ENCODE measurements at regions of chr2 and their contacts with region 1.

Region 1: DNA sequence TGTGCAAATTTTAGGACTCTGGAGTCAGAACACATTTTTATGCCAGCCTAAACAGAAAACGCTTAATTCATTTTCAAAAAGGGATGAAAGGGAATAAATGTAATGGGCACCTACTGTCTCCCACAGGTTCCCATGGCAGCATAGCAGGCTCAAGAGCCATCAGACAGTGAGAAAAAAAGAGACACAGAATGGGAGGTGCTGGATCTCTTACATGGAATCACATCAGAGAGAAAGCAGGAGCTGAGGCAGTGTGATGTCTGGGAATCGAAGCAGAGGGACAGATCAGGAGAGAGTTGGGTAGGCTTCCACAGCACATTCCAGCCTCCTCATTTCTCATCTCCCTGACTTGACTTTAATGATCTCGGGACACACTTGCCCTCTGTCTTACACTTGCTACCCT is 684.3 kb downstream of the KCNJ3 start:
- DNase-seq: no peak
- H3K4me3 ChIP-seq: no peak overlapping the region
- H3K27ac ChIP-seq: no peak overlapping the region
- H3K4me1 ChIP-seq: no peaks in the 10 kb centered on the region
- H3K27me3 ChIP-seq: no peaks in the 10 kb centered on the region
- CTCF ChIP-seq: no peak

Region 2: GRCh38 chr2:157194097-157194688 is 1811.4 kb after region 1 on chr2:
- intact Hi-C with region 1: loop called (anchors 10 kb)
- DNase-seq: peak in 3 of 5 donors; percentile 12 to 71 (median 47)
- H3K4me3 ChIP-seq: no peak overlapping the region
- H3K27ac ChIP-seq: no peak overlapping the region
- H3K4me1 ChIP-seq: no peaks in the 10 kb centered on the region
- H3K27me3 ChIP-seq: no peaks in the 10 kb centered on the region
- CTCF ChIP-seq: peak; percentile 53